CD14-positive monocyte (primary cell): ENCODE measurements at regions of chr5 and their contacts with region 1.

Region 1: DNA sequence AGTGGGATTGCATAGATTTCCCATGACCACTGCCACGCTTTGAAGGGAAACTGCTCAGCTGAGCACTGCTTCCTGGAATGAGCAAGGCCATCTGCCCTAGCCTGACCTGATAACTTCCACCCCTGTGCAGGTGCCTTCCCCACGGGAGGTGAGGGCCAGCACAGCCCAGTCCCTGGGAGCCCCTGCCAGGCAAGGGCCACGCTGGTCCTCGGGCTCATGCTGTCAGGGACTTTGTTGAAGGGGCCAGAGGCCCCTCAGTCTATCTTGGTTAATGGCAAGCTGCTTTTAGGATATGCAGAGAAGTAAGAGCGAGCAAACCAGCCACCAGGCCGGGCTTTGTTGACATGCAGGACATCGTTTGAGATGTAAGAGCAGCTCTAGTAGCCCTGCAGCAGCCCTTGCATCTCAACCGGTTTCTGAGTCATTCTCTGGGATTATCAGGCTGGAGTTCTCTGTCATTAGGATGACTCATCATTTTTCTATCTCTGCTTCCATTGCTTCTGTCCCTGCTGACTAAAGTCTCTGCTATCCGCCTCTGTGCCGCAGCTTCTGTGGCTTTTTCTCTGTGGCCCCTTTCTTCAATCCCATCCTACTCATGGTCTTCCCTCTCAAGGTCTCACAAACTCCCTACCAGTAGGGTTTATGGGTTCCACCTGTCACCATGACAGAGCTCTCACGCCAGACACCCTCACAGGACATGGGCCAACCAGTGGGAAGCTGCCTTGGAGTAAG is 30.6 kb upstream of the IQGAP2 start:
- DNase-seq: peak; percentile 38 to 69 (median 58)
- H3K4me3 ChIP-seq: no peak overlapping the region
- H3K4me3 Mint-ChIP-seq: no peak overlapping the region
- H3K27ac ChIP-seq: no peak overlapping the region
- H3K27ac Mint-ChIP-seq: peak overlapping the region in 2 of 7 donors; percentile 5 to 26
- H3K4me1 ChIP-seq: peaks cover 7 to 16% of the 10 kb centered on the region in 2 donors
- H3K4me1 Mint-ChIP-seq: peaks cover 23% of the 10 kb centered on the region
- H3K27me3 ChIP-seq: no peaks in the 10 kb centered on the region
- H3K27me3 Mint-ChIP-seq: peaks cover 0 to 10% (median 9%) of the 10 kb centered on the region in 3 donors
- CTCF ChIP-seq: no peak

Region 2: DNA sequence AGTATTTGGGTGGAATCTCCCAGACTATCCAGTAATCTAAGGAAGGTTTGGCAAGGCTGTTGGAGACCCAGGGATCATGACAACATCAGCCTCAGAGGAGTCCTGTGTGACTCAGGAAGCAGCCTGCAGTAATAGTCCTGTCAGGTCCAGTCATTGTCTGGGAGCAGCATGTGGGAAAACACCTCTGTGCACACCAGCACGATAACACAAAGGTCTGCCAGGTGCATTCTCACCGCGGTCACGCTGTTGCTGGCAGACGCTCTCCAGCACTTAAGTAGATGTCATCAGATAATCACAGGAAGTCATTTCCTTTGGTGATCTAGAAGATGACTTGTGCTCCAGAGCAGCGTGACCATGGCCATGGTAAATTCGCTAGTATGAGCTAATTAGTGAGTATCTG is 68.6 kb before region 1 on chr5:
- intact Hi-C with region 1: loop called in 1 of 2 experiments (anchors 10 kb)
- DNase-seq: peak; percentile 43 to 88 (median 64)
- H3K4me3 ChIP-seq: no peak overlapping the region
- H3K4me3 Mint-ChIP-seq: no peak overlapping the region
- H3K27ac ChIP-seq: peak overlapping the region in 1 of 2 donors; percentile 85
- H3K27ac Mint-ChIP-seq: peak overlapping the region in 6 of 7 donors; percentile 6 to 95 (median 88)
- H3K4me1 ChIP-seq: peaks cover 38 to 42% of the 10 kb centered on the region in 2 donors
- H3K4me1 Mint-ChIP-seq: peaks cover 41% of the 10 kb centered on the region
- H3K27me3 ChIP-seq: no peaks in the 10 kb centered on the region
- H3K27me3 Mint-ChIP-seq: no peaks in the 10 kb centered on the region
- CTCF ChIP-seq: no peak

Region 3: GRCh38 chr5:76393035-76393680 is 20.7 kb after region 1 on chr5:
- intact Hi-C with region 1: no loop called
- DNase-seq: no peak
- H3K4me3 ChIP-seq: no peak overlapping the region
- H3K4me3 Mint-ChIP-seq: no peak overlapping the region
- H3K27ac ChIP-seq: no peak overlapping the region
- H3K27ac Mint-ChIP-seq: no peak overlapping the region
- H3K4me1 ChIP-seq: peaks cover 12 to 16% of the 10 kb centered on the region in 2 donors
- H3K4me1 Mint-ChIP-seq: peaks cover 20% of the 10 kb centered on the region
- H3K27me3 ChIP-seq: no peaks in the 10 kb centered on the region
- H3K27me3 Mint-ChIP-seq: peaks cover 0 to 6% (median 2%) of the 10 kb centered on the region in 3 donors
- CTCF ChIP-seq: no peak